ENCODE measurements at regions of chr9 and their contacts with region 1.

Region 1: DNA sequence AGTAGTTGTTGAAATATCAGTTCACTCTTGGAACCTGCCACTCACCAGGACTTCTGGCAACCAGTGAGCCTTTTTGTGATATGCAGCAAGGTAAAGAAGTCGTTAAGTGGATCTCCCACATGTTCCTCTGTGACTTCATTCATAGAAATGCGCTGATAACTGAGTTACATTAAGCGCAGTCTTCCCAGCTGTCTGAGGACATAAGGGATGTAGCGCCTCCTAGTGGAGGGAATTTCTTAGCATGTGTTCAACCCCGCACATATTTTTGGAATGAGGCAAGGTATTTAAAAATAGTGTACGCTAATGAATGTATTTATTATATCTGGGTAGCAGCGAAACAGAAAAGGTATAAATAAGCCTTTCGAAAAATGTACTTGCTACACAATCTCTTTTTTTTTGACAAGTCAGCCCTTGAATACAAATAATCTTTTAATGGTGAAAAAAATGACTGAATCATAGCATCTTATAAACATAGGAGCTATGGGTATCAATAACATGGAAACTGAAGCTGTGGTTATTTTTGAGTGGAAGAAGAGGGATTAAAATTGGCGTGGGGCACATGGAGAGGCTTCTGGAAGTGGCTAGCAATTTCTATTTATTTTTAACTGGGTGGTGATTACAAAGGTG is 38.0 kb downstream of the PALM2AKAP2 start:
- DNase-seq: peak; percentile 60 to 79
- H3K4me3 ChIP-seq: no peak overlapping the region
- H3K4me1 ChIP-seq: no peaks in the 10 kb centered on the region
- H3K27me3 ChIP-seq: 0 out of 2 replicates have a peak, but pooled peaks cover 6% of the 10 kb centered on the region

Region 2: DNA sequence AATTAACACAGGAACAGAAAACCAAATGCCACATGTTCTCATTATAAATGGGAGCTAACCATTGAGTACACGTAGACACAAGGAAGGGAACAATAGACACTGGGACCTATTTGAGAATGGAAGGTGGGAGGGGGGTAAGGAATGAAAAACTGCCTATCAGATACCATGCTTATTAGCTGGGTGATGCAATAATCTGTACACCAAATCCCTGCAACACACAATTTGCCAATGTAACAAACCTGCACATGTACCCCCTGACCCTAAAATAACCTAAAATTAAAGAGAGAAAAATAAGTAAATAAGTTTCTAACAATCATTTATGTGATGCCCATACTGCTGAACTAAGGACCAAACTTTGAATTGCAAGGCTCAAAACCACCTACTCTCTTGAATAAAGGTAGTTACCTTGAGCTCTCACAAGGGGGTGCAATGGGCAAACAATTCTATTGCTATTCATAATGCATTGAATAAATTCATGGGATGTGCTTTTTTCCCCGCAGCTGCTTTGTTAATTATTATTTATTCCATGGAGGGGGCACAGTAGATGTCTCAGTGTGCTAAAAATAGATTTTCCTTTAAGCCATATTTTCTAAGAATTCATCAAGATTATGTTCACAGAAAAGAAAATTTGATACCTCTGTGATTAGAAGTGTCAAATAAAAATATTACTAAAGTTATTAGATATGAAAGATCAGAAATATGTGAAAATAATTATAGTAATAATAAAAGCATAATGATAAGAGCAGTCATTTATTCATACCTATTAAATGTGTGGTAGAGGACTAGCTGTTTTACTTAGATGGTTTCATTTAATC is 243.7 kb before region 1 on chr9:
- in situ Hi-C with region 1: loop called (anchors 10 kb)
- DNase-seq: peak; percentile 42 to 61
- H3K4me3 ChIP-seq: no peak overlapping the region
- H3K4me1 ChIP-seq: no peaks in the 10 kb centered on the region
- H3K27me3 ChIP-seq: no peaks in the 10 kb centered on the region; the same call in 1 of the 2 replicates

Measured in HAP-1 (cell line).